PC-3 (cell line): ENCODE measurements at regions of chr9 and their contacts with region 1.

Region 1: DNA sequence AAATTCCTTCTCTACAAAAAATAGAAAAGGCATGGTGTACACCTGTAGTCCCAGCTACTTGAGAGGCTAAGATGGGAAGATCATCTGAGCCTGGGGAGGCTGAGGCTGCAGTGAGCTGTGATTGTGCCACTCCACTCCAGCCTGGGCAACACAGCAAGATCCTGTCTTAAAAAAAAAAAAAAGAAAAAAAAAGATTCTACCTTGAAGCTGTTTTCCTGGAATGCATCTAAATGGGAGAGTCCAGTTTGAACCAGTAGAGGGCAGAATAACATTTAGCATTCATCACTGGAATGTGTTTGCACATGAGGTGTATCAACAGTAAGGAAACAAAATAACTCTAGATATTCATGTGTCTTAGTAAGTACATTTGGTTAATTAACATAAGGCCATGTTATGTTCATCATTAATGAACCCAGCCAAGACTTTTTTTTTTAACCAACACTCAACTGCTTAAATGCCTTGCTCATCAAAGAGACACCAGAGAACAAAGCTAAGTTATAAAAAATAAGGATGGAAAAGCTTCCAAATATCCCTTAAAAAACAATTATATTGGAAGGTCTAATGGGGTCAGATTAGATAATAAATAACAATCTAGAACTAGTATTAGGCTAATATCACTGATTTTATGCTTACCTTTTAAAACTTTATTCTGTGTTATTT is 16.1 kb downstream of the IFNE start:
- DNase-seq: peak; percentile 77
- ATAC-seq: peak; percentile 48; the same call in 1 of the 2 replicates
- H3K4me3 ChIP-seq: no peak overlapping the region
- H3K27ac ChIP-seq: no peak overlapping the region
- H3K4me1 ChIP-seq: no peaks in the 10 kb centered on the region
- H3K27me3 ChIP-seq: no peaks in the 10 kb centered on the region
- CTCF ChIP-seq: peak; percentile 79

Region 2: GRCh38 chr9:20948703-20949102 is 517.3 kb before region 1 on chr9:
- CTCF ChIA-PET with region 1: no interaction called
- POLR2A ChIA-PET with region 1: interaction called, 16 read pairs
- intact Hi-C with region 1: no loop called
- DNase-seq: no peak
- ATAC-seq: no peak
- H3K4me3 ChIP-seq: no peak overlapping the region
- H3K27ac ChIP-seq: no peak overlapping the region
- H3K4me1 ChIP-seq: peaks cover 6% of the 10 kb centered on the region; the same call in 1 of the 2 replicates
- H3K27me3 ChIP-seq: no peaks in the 10 kb centered on the region
- CTCF ChIP-seq: no peak

Region 3: DNA sequence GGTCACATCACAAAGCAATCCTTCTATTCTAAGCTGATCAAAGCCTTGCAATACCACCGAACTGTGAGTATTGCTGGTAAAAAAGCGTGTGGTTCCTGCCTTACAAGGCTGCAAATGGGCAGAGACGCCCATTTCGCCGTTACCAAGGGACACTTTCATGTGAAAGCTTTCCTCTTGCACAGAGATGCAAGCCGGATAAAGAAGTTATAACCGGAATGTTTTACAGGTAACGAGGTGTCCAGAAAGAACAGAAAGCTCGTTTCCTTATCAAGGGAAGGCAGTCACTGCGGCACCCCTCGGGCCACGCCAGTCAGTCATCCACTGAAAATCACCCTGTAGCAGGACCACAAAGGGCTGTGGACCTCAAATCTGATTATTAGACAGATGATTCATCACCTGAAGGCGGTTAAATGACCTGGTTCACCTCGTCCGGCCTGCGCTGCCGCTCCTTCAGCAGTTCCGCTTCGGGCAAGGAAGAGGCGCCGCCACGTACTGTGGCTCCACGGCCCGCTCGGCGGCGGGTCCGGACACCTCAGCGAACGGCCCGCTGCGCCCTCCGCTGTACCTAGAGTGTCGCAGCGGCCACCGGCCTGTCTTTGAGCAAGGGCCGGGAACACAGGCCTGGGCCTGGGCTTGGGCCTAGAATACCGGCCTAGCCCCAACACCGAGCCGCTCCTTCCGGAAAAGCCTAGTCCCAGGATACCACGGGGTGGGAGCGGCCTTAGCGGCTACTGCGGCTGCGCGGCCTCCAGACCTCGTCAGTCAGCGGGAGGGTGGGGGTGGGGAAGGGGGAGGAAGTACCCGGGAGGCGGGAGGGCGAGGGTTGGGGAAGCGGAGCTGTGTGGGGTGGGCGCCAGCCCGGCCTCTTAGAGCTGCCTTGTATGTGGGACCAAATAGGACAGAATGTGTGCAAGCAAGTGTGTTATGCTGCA is 131.0 kb before region 1 on chr9 and contains the start of gene KLHL9:
- CTCF ChIA-PET with region 1: no interaction called
- POLR2A ChIA-PET with region 1: no interaction called
- intact Hi-C with region 1: no loop called
- DNase-seq: peak; percentile 81
- ATAC-seq: peak; percentile 91
- H3K4me3 ChIP-seq: peak within 1 kb of the TSS; percentile 76
- H3K27ac ChIP-seq: peak within 1 kb of the TSS; percentile 89
- H3K4me1 ChIP-seq: peaks cover 42% of the 10 kb centered on the region
- H3K27me3 ChIP-seq: no peaks in the 10 kb centered on the region
- CTCF ChIP-seq: no peak
- total RNA-seq, gene KLHL9: 7.5 and 11.2 TPM in 2 replicates

Region 4: GRCh38 chr9:21559424-21560280 is 93.7 kb after region 1 on chr9:
- CTCF ChIA-PET with region 1: no interaction called
- POLR2A ChIA-PET with region 1: no interaction called
- intact Hi-C with region 1: loop called (anchors 10 kb)
- DNase-seq: peak; percentile 82
- ATAC-seq: peak; percentile 78
- H3K4me3 ChIP-seq: peak overlapping the region; percentile 96
- H3K27ac ChIP-seq: peak overlapping the region; percentile 99
- H3K4me1 ChIP-seq: peaks cover 32% of the 10 kb centered on the region
- H3K27me3 ChIP-seq: no peaks in the 10 kb centered on the region
- CTCF ChIP-seq: no peak

Region 5: DNA sequence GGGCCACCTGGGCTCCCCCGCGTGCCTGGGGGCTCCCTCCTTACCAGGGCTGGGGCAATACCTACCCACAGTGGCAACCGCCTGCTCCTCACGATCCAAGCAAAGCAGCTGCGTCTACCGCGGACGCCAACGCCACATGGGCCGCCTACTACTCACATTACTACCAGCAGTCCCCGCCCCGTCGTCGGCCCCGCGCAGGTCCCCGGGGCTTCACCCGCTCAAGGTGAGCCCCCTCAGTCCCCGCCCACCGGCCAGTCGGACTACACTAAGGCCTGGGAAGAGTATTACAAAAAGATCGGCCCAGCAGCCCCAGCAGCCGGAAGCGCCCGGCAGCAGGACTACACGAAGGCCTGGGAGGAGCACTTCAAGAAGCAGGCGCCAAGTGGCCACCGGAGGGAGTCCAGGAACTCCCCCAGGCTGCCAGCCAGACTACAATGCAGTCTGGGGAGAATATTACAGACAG is 230.5 kb after region 1 on chr9:
- CTCF ChIA-PET with region 1: no interaction called
- POLR2A ChIA-PET with region 1: no interaction called
- intact Hi-C with region 1: no loop called
- DNase-seq: no peak
- ATAC-seq: no peak
- H3K4me3 ChIP-seq: no peak overlapping the region
- H3K27ac ChIP-seq: no peak overlapping the region
- H3K4me1 ChIP-seq: no peaks in the 10 kb centered on the region
- H3K27me3 ChIP-seq: no peaks in the 10 kb centered on the region
- CTCF ChIP-seq: 0 out of 2 replicates have a peak, but pooled peaks have one; percentile 15